Activated CD4-positive, alpha-beta memory T cell treated with anti-CD3 and anti-CD28 coated beads for 36 hours (primary cell): ENCODE measurements at regions of chr17 and their contacts with region 1.

Region 1: DNA sequence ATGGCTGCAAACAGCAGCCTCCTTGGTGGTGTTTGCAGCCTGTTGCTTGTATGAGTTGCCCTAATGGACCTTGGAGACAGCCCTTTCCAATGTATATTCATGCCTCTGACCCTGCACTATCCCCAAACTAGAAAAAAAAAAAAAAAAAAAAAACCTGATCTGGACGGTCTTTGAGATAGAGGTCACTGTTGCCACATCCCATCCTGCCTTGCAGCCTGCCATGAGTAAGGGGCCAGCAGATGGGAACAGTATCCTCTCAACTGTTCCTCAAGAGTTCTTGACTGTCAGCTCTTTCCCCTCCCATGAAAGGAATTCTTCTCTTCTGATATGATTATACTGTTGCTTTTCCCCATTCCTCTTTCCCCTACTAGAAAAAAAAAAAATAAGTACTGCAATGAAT is 152.4 kb downstream of the SSH2 start:
- DNase-seq: no peak
- H3K4me3 Mint-ChIP-seq: no peak overlapping the region
- H3K27ac Mint-ChIP-seq: no peak overlapping the region
- H3K4me1 Mint-ChIP-seq: peaks cover 7% of the 10 kb centered on the region
- H3K27me3 Mint-ChIP-seq: no peaks in the 10 kb centered on the region

Region 2: DNA sequence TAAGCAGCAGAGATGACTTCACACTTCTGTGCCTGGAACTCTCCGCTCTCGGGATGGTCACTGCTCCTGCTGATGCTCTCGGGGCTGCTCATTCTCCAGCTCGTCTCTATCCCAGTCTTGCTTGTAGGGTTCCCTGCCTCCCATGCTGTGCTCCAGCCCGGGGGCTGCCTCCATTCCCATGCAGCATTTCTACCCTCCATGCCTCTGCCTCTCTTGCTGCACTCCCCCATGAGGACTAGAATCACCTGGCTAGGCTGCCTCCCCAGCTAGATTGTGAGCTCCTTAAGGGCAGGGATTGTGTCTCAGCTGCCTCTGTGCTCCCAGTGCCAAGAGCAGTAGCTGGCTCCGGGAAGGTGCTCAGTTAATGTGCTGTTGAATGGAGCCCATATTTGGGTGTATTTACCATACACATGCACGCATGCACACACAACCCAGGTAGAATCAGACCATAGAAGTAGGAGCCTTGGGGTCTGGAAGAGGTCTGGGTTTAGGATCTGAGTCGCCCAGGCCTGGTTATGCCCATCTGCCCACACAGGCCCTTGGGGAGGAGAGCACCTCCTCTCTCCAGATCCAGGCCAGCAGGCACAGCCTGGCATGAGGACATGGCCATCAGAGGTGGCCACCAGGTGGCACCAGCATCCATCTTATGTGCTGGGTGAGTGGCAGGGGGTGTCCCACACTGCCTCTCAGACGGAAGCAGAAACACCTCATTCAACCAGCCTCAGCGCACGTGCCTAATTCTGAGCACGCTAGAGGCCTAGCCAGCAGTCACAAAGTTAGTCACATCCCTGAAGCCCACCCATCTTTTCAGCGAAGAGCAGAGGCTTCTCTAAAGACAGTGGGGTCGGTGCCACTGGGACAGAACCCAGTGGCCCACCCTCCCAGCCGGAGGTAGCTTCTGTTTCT is 197.5 kb before region 1 on chr17:
- CTCF ChIA-PET with region 1: interaction called, 6 read pairs
- POLR2A ChIA-PET with region 1: no interaction called
- intact Hi-C with region 1: loop called (anchors 1 kb)
- DNase-seq: peak; percentile 94
- H3K4me3 Mint-ChIP-seq: no peak overlapping the region
- H3K27ac Mint-ChIP-seq: peak overlapping the region; percentile 47
- H3K4me1 Mint-ChIP-seq: peaks cover 12% of the 10 kb centered on the region
- H3K27me3 Mint-ChIP-seq: no peaks in the 10 kb centered on the region

Region 3: GRCh38 chr17:29640413-29640812 is 137.2 kb before region 1 on chr17:
- CTCF ChIA-PET with region 1: interaction called, 196 read pairs
- POLR2A ChIA-PET with region 1: no interaction called
- intact Hi-C with region 1: loop called (anchors 1 kb)
- DNase-seq: no peak
- H3K4me3 Mint-ChIP-seq: no peak overlapping the region
- H3K27ac Mint-ChIP-seq: peak overlapping the region; percentile 3
- H3K4me1 Mint-ChIP-seq: peaks cover 27% of the 10 kb centered on the region
- H3K27me3 Mint-ChIP-seq: no peaks in the 10 kb centered on the region

Region 4: GRCh38 chr17:29722411-29723198 is 55.1 kb before region 1 on chr17:
- CTCF ChIA-PET with region 1: interaction called, 10 read pairs
- POLR2A ChIA-PET with region 1: no interaction called
- intact Hi-C with region 1: no loop called
- DNase-seq: peak; percentile 35
- H3K4me3 Mint-ChIP-seq: peak overlapping the region; percentile 28
- H3K27ac Mint-ChIP-seq: peak overlapping the region; percentile 56
- H3K4me1 Mint-ChIP-seq: peaks cover 69% of the 10 kb centered on the region
- H3K27me3 Mint-ChIP-seq: no peaks in the 10 kb centered on the region

Region 5: GRCh38 chr17:29918922-29919856 is 141.5 kb after region 1 on chr17:
- CTCF ChIA-PET with region 1: no interaction called
- POLR2A ChIA-PET with region 1: no interaction called
- intact Hi-C with region 1: no loop called
- DNase-seq: no peak
- H3K4me3 Mint-ChIP-seq: no peak overlapping the region
- H3K27ac Mint-ChIP-seq: no peak overlapping the region
- H3K4me1 Mint-ChIP-seq: peaks cover 30% of the 10 kb centered on the region
- H3K27me3 Mint-ChIP-seq: no peaks in the 10 kb centered on the region